HEK293 (cell line): ENCODE measurements at regions of chr6 and their contacts with region 1.

Region 1: GRCh38 chr6:158605266-158605878 is 39.2 kb downstream of the DYNLT1 start:
- H3K4me3 ChIP-seq: no peak overlapping the region
- H3K27ac ChIP-seq: no peak overlapping the region
- H3K4me1 ChIP-seq: no peaks in the 10 kb centered on the region
- CTCF ChIP-seq: no peak; the same call in 1 of the 2 replicates

Region 2: DNA sequence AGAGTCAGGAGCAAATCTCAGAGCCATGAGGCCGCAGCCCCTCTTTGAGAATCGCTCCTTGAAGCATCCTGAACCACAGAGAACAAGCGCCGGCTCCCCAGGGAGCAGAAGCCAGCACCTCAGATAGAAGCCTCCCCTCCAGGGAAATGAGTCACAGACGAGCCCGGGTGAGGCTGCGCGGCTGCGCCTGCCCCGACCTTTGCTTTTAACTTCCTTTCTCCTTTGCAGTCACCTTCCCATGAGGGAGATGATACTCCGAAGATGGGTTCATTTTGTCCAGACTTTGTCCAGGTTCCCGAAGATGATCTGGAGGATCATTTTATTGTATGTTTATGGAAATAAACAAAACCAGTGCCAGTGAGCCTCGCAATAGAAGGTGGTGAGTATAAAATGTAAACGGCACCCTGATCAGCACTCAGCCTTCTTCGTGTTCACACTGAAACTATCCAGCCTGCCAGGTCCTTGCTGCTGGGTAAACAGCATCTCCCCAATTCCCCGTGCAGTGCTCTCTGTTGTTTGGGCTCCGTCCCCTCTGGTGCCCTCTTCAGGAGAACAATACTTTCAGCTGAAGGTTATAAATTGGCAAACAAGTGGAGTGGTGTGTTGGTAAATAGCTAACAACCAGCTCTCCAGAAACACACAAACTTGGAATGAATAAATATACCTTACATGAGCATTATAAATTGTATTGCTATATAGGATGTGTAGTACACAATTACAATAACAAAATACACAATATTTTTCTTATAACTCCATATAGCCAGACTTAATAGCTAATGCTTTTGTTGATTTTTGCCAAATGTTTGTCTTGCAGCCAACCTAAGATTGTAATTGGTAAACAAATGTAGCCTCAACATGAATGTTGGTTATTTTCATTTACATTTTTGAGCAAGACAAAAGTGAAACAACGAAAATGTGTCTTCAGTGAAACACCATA is 86.9 kb before region 1 on chr6:
- CTCF ChIA-PET with region 1: interaction called, 12 read pairs
- POLR2A ChIA-PET with region 1: no interaction called
- H3K4me3 ChIP-seq: peak overlapping the region; percentile 35
- H3K27ac ChIP-seq: no peak overlapping the region; the same call in 1 of the 2 replicates
- H3K4me1 ChIP-seq: 0 out of 2 replicates have a peak, but pooled peaks cover 4% of the 10 kb centered on the region
- CTCF ChIP-seq: 0 out of 2 replicates have a peak, but pooled peaks have one; percentile 33

Region 3: GRCh38 chr6:158591134-158591809 is 14.1 kb before region 1 on chr6:
- CTCF ChIA-PET with region 1: interaction called, 8 read pairs
- POLR2A ChIA-PET with region 1: interaction called, 10 read pairs
- H3K4me3 ChIP-seq: no peak overlapping the region
- H3K27ac ChIP-seq: no peak overlapping the region
- H3K4me1 ChIP-seq: no peaks in the 10 kb centered on the region
- CTCF ChIP-seq: no peak

Region 4: GRCh38 chr6:158914941-158915340 is 309.6 kb after region 1 on chr6:
- CTCF ChIA-PET with region 1: no interaction called
- POLR2A ChIA-PET with region 1: interaction called, 11 read pairs
- H3K4me3 ChIP-seq: no peak overlapping the region
- H3K27ac ChIP-seq: no peak overlapping the region
- H3K4me1 ChIP-seq: peaks cover 2% of the 10 kb centered on the region
- CTCF ChIP-seq: no peak